ENCODE measurements at regions of chr5 and their contacts with region 1.

Region 1: DNA sequence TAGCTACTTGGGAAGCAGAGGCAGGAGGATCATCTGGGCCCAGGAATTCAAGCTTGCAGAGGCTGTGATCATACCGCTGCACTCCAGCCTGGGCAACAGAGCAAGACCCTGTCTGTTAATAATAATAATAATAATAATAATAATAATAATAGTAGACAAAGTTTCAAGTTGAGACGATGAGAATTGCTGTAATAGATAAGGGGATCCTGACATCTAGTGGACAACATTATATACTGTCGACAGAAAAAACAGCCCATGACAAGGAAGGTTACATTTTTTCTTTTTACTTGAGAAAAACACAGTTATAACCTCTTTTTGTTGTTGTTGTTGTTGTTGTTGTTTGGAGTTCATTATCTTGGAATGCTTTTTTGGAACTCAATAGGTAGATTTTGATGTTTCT is 35.3 kb downstream of the NDFIP1 start:
- DNase-seq: no peak

Region 2: GRCh38 chr5:141691867-141692532 is 451.9 kb before region 1 on chr5:
- intact Hi-C with region 1: loop called (anchors 5 kb)
- DNase-seq: peak; percentile 76 to 96 (median 90)

Region 3: DNA sequence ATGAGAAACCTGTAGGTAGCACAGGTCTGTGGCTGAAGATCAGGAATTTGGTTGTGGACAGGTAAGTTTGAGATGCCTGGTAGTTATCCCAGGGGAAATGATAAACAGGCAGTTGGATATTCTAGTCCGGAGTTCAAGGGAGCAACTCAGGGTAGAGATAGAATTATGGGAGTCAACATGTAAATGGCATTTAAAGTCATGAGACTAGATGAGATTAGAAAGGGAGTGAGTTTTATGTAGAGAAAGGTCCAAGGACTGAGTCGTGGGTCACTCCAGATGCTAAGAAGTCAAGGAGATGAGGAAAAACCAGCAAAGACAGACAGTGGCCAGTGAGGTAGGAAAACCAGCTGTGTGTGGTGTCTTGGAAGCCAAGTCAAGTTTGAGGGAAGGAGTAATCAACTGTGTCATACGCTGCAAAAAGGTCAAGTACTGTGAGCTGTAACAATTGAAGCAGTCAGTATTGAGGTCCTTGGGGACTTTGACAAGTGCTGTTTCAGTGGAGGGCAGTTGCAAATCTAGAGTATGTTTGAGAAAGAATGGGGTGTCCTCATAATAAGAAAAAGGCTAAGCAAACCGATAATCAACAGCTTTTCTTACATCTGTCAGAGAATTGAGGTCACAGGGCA is 149.3 kb before region 1 on chr5:
- intact Hi-C with region 1: loop called (anchors 5 kb)
- DNase-seq: no peak

Region 4: GRCh38 chr5:142253938-142254337 is 110.1 kb after region 1 on chr5:
- intact Hi-C with region 1: no loop called
- DNase-seq: no peak

Measured in head of caudate nucleus (tissue), 42 donors.